ENCODE measurements at regions of chr6 and their contacts with region 1.

Region 1: DNA sequence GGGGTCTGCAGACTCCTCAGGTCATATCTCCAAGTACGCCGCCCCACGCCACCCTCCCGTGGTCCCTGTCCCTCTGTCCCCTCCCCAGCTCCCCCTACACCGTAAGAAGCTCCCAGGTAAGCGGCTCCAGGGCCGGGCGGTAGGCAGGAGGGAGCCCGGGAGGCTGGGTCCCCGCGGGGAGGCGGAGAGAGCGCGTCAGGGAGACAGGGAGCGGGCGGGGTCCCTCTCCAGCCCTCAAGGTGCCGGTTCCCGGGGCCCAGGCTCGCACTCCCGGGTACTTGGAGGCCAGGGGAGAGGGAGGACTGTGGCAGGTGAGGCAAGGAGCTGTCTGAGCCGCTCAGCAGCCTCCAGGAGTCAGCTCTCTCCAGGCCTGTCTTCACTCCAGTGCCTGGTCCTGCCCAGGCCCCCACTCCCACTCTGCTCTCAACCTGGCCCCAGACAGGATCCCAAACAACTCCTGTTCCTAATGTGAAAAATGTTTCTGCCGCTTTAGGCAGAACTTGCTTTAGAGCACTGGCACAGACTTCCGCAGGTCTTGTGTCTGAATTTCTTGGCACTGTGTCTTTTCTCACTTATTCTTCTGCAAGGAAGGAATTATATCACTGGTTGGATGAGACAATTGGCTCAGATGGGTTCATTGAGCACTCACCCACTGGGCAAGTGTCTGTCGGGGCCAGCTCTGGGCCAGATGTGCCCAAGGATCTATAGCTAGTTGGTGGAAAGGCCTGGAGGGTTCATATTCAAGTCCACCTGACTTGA is 36.6 kb downstream of the HLA-G start:
- DNase-seq: no peak
- ATAC-seq: no peak
- H3K4me3 Mint-ChIP-seq: no peak overlapping the region
- H3K27ac Mint-ChIP-seq: no peak overlapping the region
- H3K4me1 Mint-ChIP-seq: no peaks in the 10 kb centered on the region
- H3K27me3 Mint-ChIP-seq: peaks cover 48% of the 10 kb centered on the region
- CTCF ChIP-seq: no peak

Region 2: GRCh38 chr6:29045075-29045474 is 819.1 kb before region 1 on chr6 and contains the start of gene OR2W1:
- CTCF ChIA-PET with region 1: no interaction called
- POLR2A ChIA-PET with region 1: no interaction called
- intact Hi-C with region 1: no loop called
- DNase-seq: no peak
- ATAC-seq: no peak
- H3K4me3 Mint-ChIP-seq: no peak within 1 kb of the TSS
- H3K27ac Mint-ChIP-seq: no peak within 1 kb of the TSS
- H3K4me1 Mint-ChIP-seq: no peaks in the 10 kb centered on the region
- H3K27me3 Mint-ChIP-seq: peaks cover 31% of the 10 kb centered on the region
- CTCF ChIP-seq: no peak
- total RNA-seq, gene OR2W1: not detected in 2 replicates

Region 3: GRCh38 chr6:29909985-29910384 is 45.8 kb after region 1 on chr6:
- CTCF ChIA-PET with region 1: no interaction called
- POLR2A ChIA-PET with region 1: no interaction called
- intact Hi-C with region 1: loop called (anchors 2 kb)
- DNase-seq: no peak
- ATAC-seq: no peak
- H3K4me3 Mint-ChIP-seq: no peak overlapping the region
- H3K27ac Mint-ChIP-seq: no peak overlapping the region
- H3K4me1 Mint-ChIP-seq: no peaks in the 10 kb centered on the region
- H3K27me3 Mint-ChIP-seq: no peaks in the 10 kb centered on the region
- CTCF ChIP-seq: no peak